HepG2 (cell line): ENCODE measurements at regions of chr20 and their contacts with region 1.

Region 1: GRCh38 chr20:1466211-1467081 is at the start of gene NSFL1C:
- DNase-seq: peak; percentile 92
- ATAC-seq: peak; percentile 87
- H3K4me3 ChIP-seq: peak within 1 kb of the TSS; percentile 85 to 99 (median 98)
- H3K27ac ChIP-seq: peak within 1 kb of the TSS; percentile 80
- H3K4me1 ChIP-seq: peaks cover 69% of the 10 kb centered on the region
- H3K27me3 ChIP-seq: no peaks in the 10 kb centered on the region; a peak in 2 of 5 replicates
- CTCF ChIP-seq: peak; percentile 95
- EP300 ChIP-seq: peak; percentile 46 to 72
- POLR2A ChIP-seq: peak; percentile 88
- RAD21 ChIP-seq: peak; percentile 93
- total RNA-seq, gene NSFL1C: 62.7 and 74.0 TPM in 2 replicates

Region 2: GRCh38 chr20:1118336-1119127 is 347.9 kb before region 1 on chr20 and contains the start of gene PSMF1:
- CTCF ChIA-PET with region 1: no interaction called
- POLR2A ChIA-PET with region 1: no interaction called
- in situ Hi-C with region 1: no loop called
- intact Hi-C with region 1: loop called (anchors 1 kb)
- DNase-seq: peak; percentile 92
- ATAC-seq: peak; percentile 89
- H3K4me3 ChIP-seq: peak within 1 kb of the TSS; percentile 80 to 99 (median 93)
- H3K27ac ChIP-seq: peak within 1 kb of the TSS; percentile 72
- H3K4me1 ChIP-seq: peaks cover 62% of the 10 kb centered on the region
- H3K27me3 ChIP-seq: no peaks in the 10 kb centered on the region; a peak in 1 of 5 replicates
- CTCF ChIP-seq: peak; percentile 63
- EP300 ChIP-seq: peak; percentile 73 to 86
- POLR2A ChIP-seq: peak; percentile 97
- RAD21 ChIP-seq: peak; percentile 77
- total RNA-seq, gene PSMF1: 86.0 and 113 TPM in 2 replicates

Region 3: DNA sequence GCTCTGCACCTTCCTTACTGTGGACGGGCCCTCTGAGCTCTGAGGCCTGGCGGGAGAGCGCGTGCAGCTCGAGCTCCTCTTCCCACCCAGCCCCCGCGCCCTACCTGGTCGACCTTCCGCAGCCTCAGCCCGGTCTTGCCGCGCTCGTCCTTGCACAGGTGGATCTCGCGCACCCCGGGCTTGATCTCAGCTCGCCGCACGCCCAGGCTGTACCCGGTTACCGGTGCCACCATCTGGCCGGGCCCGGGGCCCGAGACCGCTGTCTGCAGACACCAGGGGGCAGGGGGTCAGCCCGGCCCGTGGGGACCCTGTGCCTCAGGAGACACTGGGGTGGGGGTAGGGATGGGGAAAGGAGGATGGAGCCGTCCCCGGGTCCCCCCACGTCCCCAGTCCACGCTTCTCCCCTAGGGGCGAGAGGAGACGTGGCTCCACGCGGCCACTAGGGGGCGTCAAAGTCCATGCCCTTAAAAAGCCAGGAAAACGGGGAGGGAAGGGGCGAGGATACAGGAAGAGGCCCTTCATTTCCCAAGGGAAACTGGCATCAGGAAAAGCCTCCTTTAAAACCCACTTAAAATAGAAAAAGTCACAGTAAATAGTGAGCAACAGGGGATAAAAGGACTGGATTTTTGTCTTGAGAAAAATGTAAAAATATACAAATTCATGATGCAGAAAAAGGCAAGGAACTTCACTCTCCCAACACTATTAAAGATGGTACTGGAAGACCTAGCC is 153.0 kb before region 1 on chr20:
- CTCF ChIA-PET with region 1: interaction called, 23 read pairs
- POLR2A ChIA-PET with region 1: no interaction called
- in situ Hi-C with region 1: no loop called
- intact Hi-C with region 1: loop called (anchors 1 kb)
- DNase-seq: peak; percentile 71
- ATAC-seq: peak; percentile 83
- H3K4me3 ChIP-seq: no peak overlapping the region
- H3K27ac ChIP-seq: no peak overlapping the region
- H3K4me1 ChIP-seq: peaks cover 18% of the 10 kb centered on the region
- H3K27me3 ChIP-seq: peaks cover 0 to 3% of the 10 kb centered on the region in 2 experiments; a peak in 3 of 5 replicates
- CTCF ChIP-seq: peak; percentile 97
- EP300 ChIP-seq: no peak
- POLR2A ChIP-seq: no peak
- RAD21 ChIP-seq: peak; percentile 95

Region 4: GRCh38 chr20:1437235-1437904 is 29.1 kb before region 1 on chr20:
- CTCF ChIA-PET with region 1: interaction called, 6 read pairs
- POLR2A ChIA-PET with region 1: no interaction called
- in situ Hi-C with region 1: no loop called
- intact Hi-C with region 1: loop called (anchors 5 kb)
- DNase-seq: peak; percentile 83
- ATAC-seq: peak; percentile 68
- H3K4me3 ChIP-seq: no peak overlapping the region
- H3K27ac ChIP-seq: no peak overlapping the region
- H3K4me1 ChIP-seq: no peaks in the 10 kb centered on the region
- H3K27me3 ChIP-seq: no peaks in the 10 kb centered on the region
- CTCF ChIP-seq: peak; percentile 98
- EP300 ChIP-seq: no peak
- POLR2A ChIP-seq: no peak
- RAD21 ChIP-seq: peak; percentile 85

Region 5: DNA sequence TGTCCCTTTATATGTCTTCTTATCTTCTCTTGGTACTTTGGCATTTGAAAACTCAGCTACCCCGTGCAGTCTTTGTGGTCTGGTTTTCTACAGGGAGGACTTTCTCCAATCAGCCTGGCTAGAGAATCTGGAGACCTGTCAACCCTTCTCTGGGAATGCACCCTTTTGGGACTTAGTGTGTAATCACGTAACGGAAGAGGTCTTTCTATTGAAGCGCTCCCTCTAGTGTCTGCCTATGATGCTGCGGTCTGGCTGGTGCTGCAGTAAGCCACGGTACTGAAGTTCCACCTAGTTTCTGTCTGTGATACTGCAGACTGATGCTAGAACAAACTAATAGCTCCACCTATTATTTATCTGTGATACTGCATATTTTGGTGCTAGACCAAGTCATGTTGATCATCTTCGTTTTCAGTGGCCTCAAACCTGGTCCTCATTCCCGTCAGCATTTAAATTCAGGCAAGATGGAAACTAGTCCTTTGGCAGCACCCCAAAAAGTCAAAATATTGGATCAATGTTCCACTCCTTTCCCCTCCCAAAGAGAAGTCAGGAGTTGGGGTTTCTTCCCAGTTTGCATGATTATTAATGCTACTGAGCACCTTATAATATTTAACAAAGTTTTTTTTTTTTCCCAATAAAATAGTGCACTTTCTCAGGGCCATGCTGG is 37.2 kb after region 1 on chr20:
- CTCF ChIA-PET with region 1: interaction called, 30 read pairs
- POLR2A ChIA-PET with region 1: no interaction called
- in situ Hi-C with region 1: no loop called
- intact Hi-C with region 1: loop called (anchors 1 kb)
- DNase-seq: peak; percentile 94
- ATAC-seq: peak; percentile 100
- H3K4me3 ChIP-seq: no peak overlapping the region
- H3K27ac ChIP-seq: no peak overlapping the region
- H3K4me1 ChIP-seq: peaks cover 9% of the 10 kb centered on the region; the same call in 1 of the 2 replicates
- H3K27me3 ChIP-seq: peaks cover 0 to 6% of the 10 kb centered on the region in 2 experiments; a peak in 3 of 5 replicates
- CTCF ChIP-seq: peak; percentile 97
- EP300 ChIP-seq: no peak
- POLR2A ChIP-seq: no peak
- RAD21 ChIP-seq: peak; percentile 95